Ovary (tissue), 10 donors: ENCODE measurements at regions of chr6 and their contacts with region 1.

Region 1: DNA sequence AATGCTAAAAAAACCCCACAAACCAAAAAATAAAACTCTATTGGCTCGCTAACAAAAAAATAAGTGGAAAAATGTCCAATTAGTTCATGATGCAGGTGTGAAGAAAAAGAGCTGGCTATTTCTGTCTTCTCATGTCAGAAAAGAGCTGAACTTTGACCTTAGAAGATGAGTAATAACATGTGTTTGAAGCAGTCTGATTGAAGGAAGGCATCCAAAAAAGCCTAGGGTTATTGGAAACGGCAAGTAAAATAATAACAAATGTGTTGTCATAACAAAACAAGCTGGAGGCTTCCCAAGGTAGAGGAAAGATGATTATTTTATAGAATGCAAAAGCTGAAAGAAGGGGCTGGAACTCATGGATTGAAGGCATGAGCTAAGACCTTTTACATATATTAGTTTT is 94.4 kb upstream of the FAM184A start:
- DNase-seq: no peak
- H3K4me3 ChIP-seq: no peak overlapping the region
- H3K27ac ChIP-seq: no peak overlapping the region
- H3K4me1 ChIP-seq: no peaks in the 10 kb centered on the region
- H3K27me3 ChIP-seq: no peaks in the 10 kb centered on the region
- CTCF ChIP-seq: no peak
- EP300 ChIP-seq: no peak
- POLR2A ChIP-seq: no peak

Region 2: DNA sequence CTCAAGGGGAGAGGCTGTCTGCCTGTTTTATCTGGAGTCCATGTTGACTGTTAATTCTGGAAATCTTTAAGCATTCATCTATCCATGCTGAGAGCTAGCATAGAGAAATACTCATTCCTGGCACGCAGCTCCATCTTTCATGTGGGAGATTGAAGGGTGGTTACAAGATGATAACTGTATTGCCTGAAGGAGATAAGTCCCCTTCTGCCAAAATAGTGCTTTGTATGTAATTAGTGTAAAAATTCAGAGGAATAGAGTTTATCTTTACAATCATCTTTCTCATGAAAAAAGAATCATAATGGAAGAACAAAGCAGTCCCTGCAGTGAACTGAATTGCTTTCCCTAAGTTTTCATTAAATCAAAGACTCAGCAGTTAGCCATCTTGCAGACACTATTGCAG is 1009.3 kb before region 1 on chr6:
- intact Hi-C with region 1: no loop called
- DNase-seq: no peak
- H3K4me3 ChIP-seq: no peak overlapping the region
- H3K27ac ChIP-seq: no peak overlapping the region
- H3K4me1 ChIP-seq: no peaks in the 10 kb centered on the region
- H3K27me3 ChIP-seq: no peaks in the 10 kb centered on the region
- CTCF ChIP-seq: no peak
- EP300 ChIP-seq: no peak
- POLR2A ChIP-seq: no peak

Region 3: GRCh38 chr6:119612911-119613381 is 440.1 kb after region 1 on chr6:
- intact Hi-C with region 1: loop called in 1 of 4 experiments (anchors 5 kb)
- DNase-seq: no peak
- H3K4me3 ChIP-seq: no peak overlapping the region
- H3K27ac ChIP-seq: no peak overlapping the region
- H3K4me1 ChIP-seq: peaks cover 8% of the 10 kb centered on the region
- H3K27me3 ChIP-seq: no peaks in the 10 kb centered on the region
- CTCF ChIP-seq: no peak
- EP300 ChIP-seq: no peak
- POLR2A ChIP-seq: no peak